CD4-positive, alpha-beta memory T cell (primary cell): ENCODE measurements at regions of chr12 and their contacts with region 1.

Region 1: GRCh38 chr12:96061864-96062453 is 26.6 kb upstream of the LTA4H start:
- DNase-seq: peak; percentile 75 to 80 (median 78)
- H3K4me3 ChIP-seq: no peak overlapping the region
- H3K4me3 Mint-ChIP-seq: peak overlapping the region in 1 of 8 donors; percentile 9
- H3K27ac ChIP-seq: no peak overlapping the region
- H3K27ac Mint-ChIP-seq: peak overlapping the region in 5 of 7 donors; percentile 1 to 73 (median 36)
- H3K4me1 ChIP-seq: peaks cover 26% of the 10 kb centered on the region
- H3K4me1 Mint-ChIP-seq: peaks cover 19 to 36% (median 27%) of the 10 kb centered on the region in 4 donors
- H3K27me3 ChIP-seq: no peaks in the 10 kb centered on the region
- H3K27me3 Mint-ChIP-seq: no peaks in the 10 kb centered on the region

Region 2: DNA sequence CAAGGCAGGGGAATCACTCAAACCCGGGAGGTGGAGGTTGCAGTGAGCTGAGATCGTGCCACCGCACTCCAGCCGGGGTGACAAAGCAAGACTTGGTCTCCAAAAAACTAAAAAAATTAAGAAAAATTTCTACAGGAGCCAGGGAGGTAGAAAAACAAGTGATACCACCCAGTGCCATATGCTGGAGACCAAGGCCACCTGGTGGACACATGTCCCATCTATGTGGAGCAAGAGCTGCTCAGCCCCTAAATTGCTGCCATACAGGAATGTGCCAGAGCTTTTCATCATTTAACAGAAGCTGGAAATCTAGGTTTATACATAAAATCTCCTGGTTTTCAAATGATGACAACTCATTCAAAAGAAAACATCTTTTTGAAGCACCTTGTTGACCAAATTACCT is 70.9 kb after region 1 on chr12:
- CTCF ChIA-PET with region 1: interaction called, 12 read pairs
- POLR2A ChIA-PET with region 1: no interaction called
- intact Hi-C with region 1: loop called (anchors 1 kb)
- DNase-seq: peak in 2 of 5 donors; percentile 5 to 19
- H3K4me3 ChIP-seq: no peak overlapping the region
- H3K4me3 Mint-ChIP-seq: no peak overlapping the region
- H3K27ac ChIP-seq: no peak overlapping the region
- H3K27ac Mint-ChIP-seq: no peak overlapping the region
- H3K4me1 ChIP-seq: peaks cover 17% of the 10 kb centered on the region
- H3K4me1 Mint-ChIP-seq: peaks cover 12 to 20% (median 15%) of the 10 kb centered on the region in 4 donors
- H3K27me3 ChIP-seq: no peaks in the 10 kb centered on the region
- H3K27me3 Mint-ChIP-seq: peaks cover 6 to 11% of the 10 kb centered on the region in 2 donors

Region 3: DNA sequence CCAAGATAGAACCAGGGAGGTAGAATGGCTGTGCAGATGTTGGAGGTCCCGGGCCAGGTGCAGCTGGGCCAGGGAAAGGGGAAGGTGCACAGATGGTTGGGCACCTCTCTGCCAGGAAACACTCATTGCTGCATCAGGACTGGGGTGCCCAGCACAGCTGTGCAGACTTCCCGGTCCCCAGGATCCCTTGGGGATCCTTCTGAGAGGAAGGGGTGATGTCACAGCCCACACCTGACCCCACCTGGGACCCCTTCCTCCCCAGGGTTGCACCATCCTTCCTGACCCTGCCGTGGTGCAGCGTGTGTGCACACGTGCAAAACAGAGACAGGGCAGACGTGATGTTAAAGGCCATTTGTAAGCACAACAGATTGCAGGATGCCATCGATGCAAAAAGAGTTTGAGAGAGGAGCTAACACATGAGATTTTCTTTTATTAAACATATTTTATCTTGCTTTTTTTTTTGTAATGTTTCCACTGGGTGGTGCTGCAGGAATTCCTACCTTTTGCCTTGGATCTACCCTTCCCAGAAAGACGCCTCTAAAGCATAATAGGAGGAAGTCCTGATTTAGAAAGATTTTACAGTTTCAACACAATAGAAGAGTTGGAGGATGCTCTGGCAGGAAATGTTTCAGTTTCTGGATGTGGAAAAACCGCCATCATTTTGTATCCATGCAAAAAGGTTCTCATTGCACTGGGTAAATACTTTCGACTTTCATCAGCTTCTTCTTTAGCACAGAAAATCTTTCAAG is 147.0 kb after region 1 on chr12:
- CTCF ChIA-PET with region 1: interaction called, 206 read pairs
- POLR2A ChIA-PET with region 1: interaction called, 10 read pairs
- intact Hi-C with region 1: no loop called
- DNase-seq: no peak
- H3K4me3 ChIP-seq: no peak overlapping the region
- H3K4me3 Mint-ChIP-seq: peak overlapping the region; percentile 57 to 96 (median 86)
- H3K27ac ChIP-seq: peak overlapping the region; percentile 62
- H3K27ac Mint-ChIP-seq: peak overlapping the region; percentile 92 to 100 (median 98)
- H3K4me1 ChIP-seq: peaks cover 100% of the 10 kb centered on the region
- H3K4me1 Mint-ChIP-seq: peaks cover 82 to 100% (median 92%) of the 10 kb centered on the region in 4 donors
- H3K27me3 ChIP-seq: no peaks in the 10 kb centered on the region
- H3K27me3 Mint-ChIP-seq: no peaks in the 10 kb centered on the region

Region 4: DNA sequence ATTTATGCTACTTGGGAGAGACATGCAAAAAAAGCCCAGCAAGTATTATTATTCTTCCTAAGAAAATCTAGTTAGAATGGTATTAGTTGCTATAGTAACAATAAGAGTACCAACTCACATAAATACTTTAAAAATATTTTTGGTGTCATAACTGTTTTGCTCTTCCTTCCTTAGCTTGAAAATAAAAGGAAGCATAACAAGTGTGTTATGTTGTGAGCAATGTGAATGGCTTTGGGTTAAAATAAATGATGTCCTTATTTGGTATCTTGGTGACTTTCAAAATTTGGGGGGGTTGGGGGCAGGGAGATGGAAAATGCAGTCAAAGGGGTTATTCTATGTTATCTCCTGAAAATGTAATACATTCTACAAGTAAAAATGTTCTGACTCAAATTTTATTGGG is 223.2 kb after region 1 on chr12:
- CTCF ChIA-PET with region 1: interaction called, 3 read pairs
- POLR2A ChIA-PET with region 1: no interaction called
- intact Hi-C with region 1: loop called (anchors 5 kb)
- DNase-seq: no peak
- H3K4me3 ChIP-seq: no peak overlapping the region
- H3K4me3 Mint-ChIP-seq: no peak overlapping the region
- H3K27ac ChIP-seq: no peak overlapping the region
- H3K27ac Mint-ChIP-seq: peak overlapping the region in 5 of 7 donors; percentile 33 to 68 (median 65)
- H3K4me1 ChIP-seq: no peaks in the 10 kb centered on the region
- H3K4me1 Mint-ChIP-seq: peaks cover 5 to 13% (median 8%) of the 10 kb centered on the region in 4 donors
- H3K27me3 ChIP-seq: no peaks in the 10 kb centered on the region
- H3K27me3 Mint-ChIP-seq: no peaks in the 10 kb centered on the region

Region 5: GRCh38 chr12:96462571-96463280 is 400.8 kb after region 1 on chr12:
- CTCF ChIA-PET with region 1: no interaction called
- POLR2A ChIA-PET with region 1: no interaction called
- intact Hi-C with region 1: no loop called
- DNase-seq: no peak
- H3K4me3 ChIP-seq: no peak overlapping the region
- H3K4me3 Mint-ChIP-seq: no peak overlapping the region
- H3K27ac ChIP-seq: no peak overlapping the region
- H3K27ac Mint-ChIP-seq: no peak overlapping the region
- H3K4me1 ChIP-seq: no peaks in the 10 kb centered on the region
- H3K4me1 Mint-ChIP-seq: no peaks in the 10 kb centered on the region
- H3K27me3 ChIP-seq: no peaks in the 10 kb centered on the region
- H3K27me3 Mint-ChIP-seq: no peaks in the 10 kb centered on the region